ENCODE measurements at regions of chr16 and their contacts with region 1.

Region 1: DNA sequence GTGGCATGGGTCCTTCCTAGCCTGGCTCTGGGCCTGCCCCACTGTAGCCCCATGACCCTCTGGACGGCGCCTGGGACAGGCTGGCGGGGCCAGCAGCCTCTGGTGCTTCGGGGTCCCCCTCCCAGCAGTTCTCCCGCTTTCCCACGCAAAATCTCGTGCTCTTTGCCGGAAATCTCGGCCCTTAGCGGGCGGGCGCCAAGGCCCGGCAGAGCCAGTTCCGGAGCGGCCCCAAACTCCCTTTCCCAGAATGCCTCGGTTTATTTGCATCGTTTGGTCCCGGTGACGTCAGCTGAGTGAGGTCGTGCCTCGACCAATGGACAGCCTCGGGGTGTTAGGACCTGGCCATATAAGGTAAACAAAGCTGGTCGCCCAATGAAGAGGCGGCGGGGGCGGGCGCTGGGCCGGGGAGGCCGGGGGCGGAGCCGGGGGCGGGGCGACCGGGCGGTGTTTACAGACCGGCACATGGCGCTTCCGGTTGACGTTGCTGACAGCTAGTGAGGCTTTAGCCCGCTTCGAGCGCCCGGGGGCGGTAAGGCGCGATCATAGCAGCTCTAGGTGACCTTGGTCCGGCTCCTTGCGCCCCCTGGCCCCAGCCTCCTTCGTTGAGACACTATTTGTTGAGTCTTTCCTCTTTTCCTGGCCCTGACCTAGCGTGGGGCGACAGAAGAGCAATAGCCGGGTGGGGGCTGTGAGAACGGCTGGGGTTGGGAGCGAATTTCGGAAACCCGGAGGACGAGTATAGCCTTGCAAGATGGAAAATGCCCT is 1.5 kb upstream of the UBALD1 start:
- DNase-seq: peak; percentile 98 to 100 (median 99)
- H3K4me3 ChIP-seq: peak overlapping the region; percentile 65 to 79
- H3K4me3 Mint-ChIP-seq: peak overlapping the region; percentile 94 to 97 (median 95)
- H3K27ac ChIP-seq: peak overlapping the region; percentile 89
- H3K27ac Mint-ChIP-seq: peak overlapping the region; percentile 95 to 100 (median 99)
- H3K4me1 ChIP-seq: peaks cover 43% of the 10 kb centered on the region
- H3K4me1 Mint-ChIP-seq: peaks cover 5 to 39% (median 25%) of the 10 kb centered on the region in 4 donors
- H3K27me3 ChIP-seq: no peaks in the 10 kb centered on the region
- H3K27me3 Mint-ChIP-seq: no peaks in the 10 kb centered on the region

Region 2: GRCh38 chr16:4307215-4308037 is 308.8 kb before region 1 on chr16:
- CTCF ChIA-PET with region 1: no interaction called
- POLR2A ChIA-PET with region 1: no interaction called
- intact Hi-C with region 1: loop called (anchors 1 kb)
- DNase-seq: peak; percentile 97 to 99 (median 98)
- H3K4me3 ChIP-seq: peak overlapping the region; percentile 47 to 85
- H3K4me3 Mint-ChIP-seq: peak overlapping the region; percentile 87 to 97 (median 92)
- H3K27ac ChIP-seq: peak overlapping the region; percentile 76
- H3K27ac Mint-ChIP-seq: peak overlapping the region; percentile 96 to 100 (median 99)
- H3K4me1 ChIP-seq: peaks cover 18% of the 10 kb centered on the region
- H3K4me1 Mint-ChIP-seq: peaks cover 17 to 33% (median 20%) of the 10 kb centered on the region in 4 donors
- H3K27me3 ChIP-seq: no peaks in the 10 kb centered on the region
- H3K27me3 Mint-ChIP-seq: no peaks in the 10 kb centered on the region

Region 3: DNA sequence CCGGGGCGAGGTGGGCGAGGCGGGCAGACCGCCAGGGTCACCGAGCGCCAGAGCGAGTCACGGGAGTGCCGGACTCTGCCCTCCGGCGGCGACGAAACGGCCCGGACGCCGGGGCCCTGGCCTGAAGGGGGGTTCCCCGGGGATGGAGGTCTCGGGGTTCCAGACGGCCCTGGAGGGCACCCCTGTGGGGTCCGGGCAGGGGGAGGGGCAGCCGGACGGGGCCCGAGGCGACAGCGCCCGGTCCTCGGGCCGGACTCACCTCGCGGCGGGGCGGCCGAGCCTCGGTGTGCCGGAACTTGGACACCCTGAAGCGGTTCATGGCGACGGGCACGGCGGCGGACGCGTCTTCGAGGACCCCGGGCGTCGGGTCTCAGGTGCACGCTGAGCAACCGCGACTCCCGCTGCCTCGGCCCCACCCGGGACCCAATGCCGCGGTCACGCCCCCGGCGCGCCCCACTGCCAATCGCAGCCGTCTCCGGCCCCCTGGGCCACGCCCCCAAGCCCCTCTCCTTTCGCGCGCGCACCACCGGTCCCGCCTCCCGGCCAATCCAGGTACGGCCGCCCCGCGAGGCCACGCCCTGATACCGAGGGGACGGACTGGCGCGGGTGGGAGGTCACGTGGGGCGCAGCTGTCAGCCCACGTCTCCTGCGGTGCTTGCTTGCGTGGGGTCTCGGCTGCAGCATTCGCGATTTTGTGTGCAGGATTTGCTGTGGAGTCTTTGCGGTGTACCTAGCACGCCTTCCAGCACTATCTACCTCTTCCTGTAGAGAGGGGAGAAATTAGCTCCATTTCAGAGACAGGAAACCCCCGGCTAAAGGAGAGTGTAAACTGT is 199.8 kb before region 1 on chr16 and contains the start of gene CORO7:
- CTCF ChIA-PET with region 1: no interaction called
- POLR2A ChIA-PET with region 1: interaction called, 9 read pairs
- intact Hi-C with region 1: loop called (anchors 1 kb)
- DNase-seq: peak; percentile 99 to 100 (median 100)
- H3K4me3 ChIP-seq: peak within 1 kb of the TSS; percentile 75 to 81
- H3K4me3 Mint-ChIP-seq: peak within 1 kb of the TSS; percentile 91 to 99 (median 98)
- H3K27ac ChIP-seq: peak within 1 kb of the TSS; percentile 95
- H3K27ac Mint-ChIP-seq: peak within 1 kb of the TSS; percentile 94 to 100 (median 99)
- H3K4me1 ChIP-seq: peaks cover 38% of the 10 kb centered on the region
- H3K4me1 Mint-ChIP-seq: peaks cover 26 to 49% (median 37%) of the 10 kb centered on the region in 4 donors
- H3K27me3 ChIP-seq: no peaks in the 10 kb centered on the region
- H3K27me3 Mint-ChIP-seq: no peaks in the 10 kb centered on the region
- total RNA-seq, gene CORO7: 176 to 184 TPM

Region 4: GRCh38 chr16:4475880-4476788 is 140.1 kb before region 1 on chr16 and contains the start of gene HMOX2:
- CTCF ChIA-PET with region 1: no interaction called
- POLR2A ChIA-PET with region 1: interaction called, 9 read pairs
- intact Hi-C with region 1: loop called (anchors 10 kb)
- DNase-seq: peak; percentile 90 to 95 (median 92)
- H3K4me3 ChIP-seq: peak within 1 kb of the TSS; percentile 86 to 91
- H3K4me3 Mint-ChIP-seq: peak within 1 kb of the TSS; percentile 92 to 95 (median 94)
- H3K27ac ChIP-seq: peak within 1 kb of the TSS; percentile 76
- H3K27ac Mint-ChIP-seq: peak within 1 kb of the TSS; percentile 90 to 96 (median 95)
- H3K4me1 ChIP-seq: peaks cover 60% of the 10 kb centered on the region
- H3K4me1 Mint-ChIP-seq: peaks cover 26 to 55% (median 38%) of the 10 kb centered on the region in 4 donors
- H3K27me3 ChIP-seq: no peaks in the 10 kb centered on the region
- H3K27me3 Mint-ChIP-seq: no peaks in the 10 kb centered on the region
- total RNA-seq, gene HMOX2: 64.1 to 72.4 TPM

Region 5: DNA sequence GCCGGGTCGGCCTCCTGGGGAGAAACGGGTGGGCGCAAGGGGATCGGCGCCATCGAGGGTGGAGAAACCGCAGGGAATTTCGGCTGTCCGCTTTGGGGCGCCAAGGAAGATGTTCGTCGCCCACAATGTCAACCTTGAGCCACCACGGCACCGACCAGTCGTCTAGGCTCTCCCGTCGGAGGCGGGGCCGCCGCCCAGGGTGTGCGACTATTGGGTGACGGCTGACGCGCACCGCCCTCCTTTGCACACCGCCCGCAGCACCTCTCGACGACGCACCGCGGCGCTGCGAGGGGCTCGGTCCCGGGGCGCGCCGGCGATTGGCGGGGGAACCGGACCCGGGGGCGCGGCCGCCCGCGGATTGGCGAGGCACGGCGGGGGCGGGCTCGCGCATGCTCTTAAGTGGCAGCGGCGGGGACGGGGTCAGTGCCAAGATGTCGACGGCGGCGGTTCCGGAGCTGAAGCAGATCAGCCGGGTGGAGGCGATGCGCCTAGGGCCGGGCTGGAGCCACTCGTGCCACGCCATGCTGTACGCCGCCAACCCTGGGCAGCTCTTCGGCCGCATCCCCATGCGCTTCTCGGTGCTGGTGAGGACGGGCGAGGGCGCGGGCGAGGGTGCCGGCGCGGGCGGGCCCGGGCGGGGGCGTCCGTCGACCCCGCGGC is 77.2 kb after region 1 on chr16 and contains the start of gene NUDT16L1:
- CTCF ChIA-PET with region 1: interaction called, 4 read pairs
- POLR2A ChIA-PET with region 1: interaction called, 16 read pairs
- intact Hi-C with region 1: loop called (anchors 1 kb)
- DNase-seq: peak; percentile 94 to 99 (median 98)
- H3K4me3 ChIP-seq: peak within 1 kb of the TSS; percentile 61 to 81
- H3K4me3 Mint-ChIP-seq: peak within 1 kb of the TSS; percentile 85 to 92 (median 88)
- H3K27ac ChIP-seq: peak within 1 kb of the TSS; percentile 81
- H3K27ac Mint-ChIP-seq: peak within 1 kb of the TSS; percentile 84 to 93 (median 91)
- H3K4me1 ChIP-seq: peaks cover 21% of the 10 kb centered on the region
- H3K4me1 Mint-ChIP-seq: peaks cover 2 to 22% (median 9%) of the 10 kb centered on the region in 4 donors
- H3K27me3 ChIP-seq: no peaks in the 10 kb centered on the region
- H3K27me3 Mint-ChIP-seq: no peaks in the 10 kb centered on the region
- total RNA-seq, gene NUDT16L1: 52.4 to 53.7 TPM

Region 6: DNA sequence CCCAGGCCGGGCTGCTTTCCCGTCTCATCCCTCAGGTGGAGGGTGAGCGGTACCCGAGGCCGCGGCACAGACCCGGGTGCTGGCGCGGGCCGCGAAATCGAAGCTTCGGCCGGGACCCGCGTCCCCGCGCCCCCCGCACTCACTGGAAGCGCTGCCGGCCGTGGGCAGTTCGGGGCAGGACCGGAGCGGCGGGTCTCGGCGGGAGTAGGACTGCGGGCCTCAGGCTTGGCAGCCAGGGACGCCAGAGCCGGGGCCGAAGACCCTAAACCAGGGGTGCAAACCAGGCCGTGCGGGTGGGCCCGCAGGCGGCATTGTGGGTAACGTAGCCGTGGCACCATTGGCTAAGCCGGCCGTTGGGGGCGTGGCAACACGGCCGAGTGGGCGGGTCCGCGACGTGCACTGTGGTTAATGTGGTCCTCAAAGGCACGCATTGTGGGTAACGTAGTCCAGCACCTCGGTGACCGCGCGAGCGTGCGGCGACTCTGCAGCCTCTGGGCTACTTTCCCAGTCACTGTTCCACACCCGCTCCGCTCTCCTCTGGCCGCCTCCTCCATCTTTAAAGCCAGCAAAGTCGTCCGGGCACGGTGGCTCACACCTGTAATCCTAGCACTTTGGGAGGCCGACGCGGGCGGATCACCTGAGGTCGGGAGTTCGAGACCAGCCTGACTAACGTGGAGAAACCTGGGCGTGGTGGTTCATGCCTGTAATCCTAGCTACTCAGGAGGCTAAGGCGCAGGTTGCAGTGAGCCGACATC is 150.8 kb after region 1 on chr16 and contains the start of gene ZNF500:
- CTCF ChIA-PET with region 1: no interaction called
- POLR2A ChIA-PET with region 1: interaction called, 13 read pairs
- intact Hi-C with region 1: loop called (anchors 1 kb)
- DNase-seq: peak; percentile 90 to 93 (median 93)
- H3K4me3 ChIP-seq: peak within 1 kb of the TSS; percentile 94 to 96
- H3K4me3 Mint-ChIP-seq: peak within 1 kb of the TSS; percentile 92 to 95 (median 94)
- H3K27ac ChIP-seq: peak within 1 kb of the TSS; percentile 79
- H3K27ac Mint-ChIP-seq: peak within 1 kb of the TSS; percentile 89 to 98 (median 94)
- H3K4me1 ChIP-seq: peaks cover 32% of the 10 kb centered on the region
- H3K4me1 Mint-ChIP-seq: peaks cover 16 to 50% (median 35%) of the 10 kb centered on the region in 4 donors
- H3K27me3 ChIP-seq: no peaks in the 10 kb centered on the region
- H3K27me3 Mint-ChIP-seq: no peaks in the 10 kb centered on the region
- total RNA-seq, gene ZNF500: 33.9 to 35.6 TPM

Region 7: GRCh38 chr16:4846891-4847773 is 230.9 kb after region 1 on chr16 and contains the starts of genes GLYR1 and UBN1:
- CTCF ChIA-PET with region 1: no interaction called
- POLR2A ChIA-PET with region 1: interaction called, 8 read pairs
- intact Hi-C with region 1: loop called (anchors 2 kb)
- DNase-seq: peak; percentile 99
- H3K4me3 ChIP-seq: peak within 1 kb of the TSS; percentile 74 to 78
- H3K4me3 Mint-ChIP-seq: peak within 1 kb of the TSS; percentile 89 to 93 (median 92)
- H3K27ac ChIP-seq: peak within 1 kb of the TSS; percentile 95
- H3K27ac Mint-ChIP-seq: peak within 1 kb of the TSS; percentile 90 to 96 (median 95)
- H3K4me1 ChIP-seq: peaks cover 55% of the 10 kb centered on the region
- H3K4me1 Mint-ChIP-seq: peaks cover 42 to 65% (median 53%) of the 10 kb centered on the region in 4 donors
- H3K27me3 ChIP-seq: no peaks in the 10 kb centered on the region
- H3K27me3 Mint-ChIP-seq: no peaks in the 10 kb centered on the region
- total RNA-seq, gene GLYR1: 117 to 121 TPM
- total RNA-seq, gene UBN1: 40.4 to 42.7 TPM